ENCODE measurements at regions of chr12 and their contacts with region 1.

Region 1: GRCh38 chr12:26884765-26885576 is 52.0 kb upstream of the ITPR2 start:
- DNase-seq: peak; percentile 37 to 89 (median 82)
- H3K4me3 ChIP-seq: peak overlapping the region in 32 of 59 donors; percentile 1 to 49 (median 32)
- H3K27ac ChIP-seq: no peak overlapping the region
- H3K27me3 ChIP-seq: no peaks in the 10 kb centered on the region
- CTCF ChIP-seq: peak; percentile 78 to 99 (median 94)

Region 2: DNA sequence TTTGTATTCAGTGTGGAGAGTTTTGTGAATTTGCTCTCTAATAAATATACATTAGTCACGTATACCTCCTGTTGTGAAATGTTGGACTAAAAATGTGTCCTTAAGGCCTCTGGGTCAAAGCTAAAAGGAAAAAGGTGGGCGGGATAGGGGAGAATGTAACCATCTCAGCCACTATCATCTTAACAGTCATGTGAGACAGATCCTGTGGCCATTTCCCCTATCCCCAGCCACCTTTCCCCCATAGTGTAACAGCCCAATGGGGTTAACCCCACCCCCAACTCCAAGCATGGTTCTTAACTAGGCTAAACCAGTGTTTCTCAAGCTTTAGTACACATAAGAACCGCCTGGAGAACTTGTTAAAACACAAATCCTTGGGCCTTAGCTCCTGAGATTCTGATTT is 45.5 kb before region 1 on chr12:
- intact Hi-C with region 1: loop called in 1 of 2 experiments (anchors 5 kb)
- DNase-seq: no peak
- H3K4me3 ChIP-seq: no peak overlapping the region
- H3K27ac ChIP-seq: no peak overlapping the region
- H3K27me3 ChIP-seq: no peaks in the 10 kb centered on the region
- CTCF ChIP-seq: no peak

Region 3: GRCh38 chr12:26853303-26854030 is 31.5 kb before region 1 on chr12:
- intact Hi-C with region 1: loop called in 1 of 2 experiments (anchors 1 kb)
- DNase-seq: peak in 9 of 10 donors; percentile 48 to 79 (median 73)
- H3K4me3 ChIP-seq: peak overlapping the region in 3 of 59 donors; percentile 7 to 19 (median 11)
- H3K27ac ChIP-seq: no peak overlapping the region
- H3K27me3 ChIP-seq: no peaks in the 10 kb centered on the region
- CTCF ChIP-seq: peak; percentile 58 to 96 (median 88)

Region 4: DNA sequence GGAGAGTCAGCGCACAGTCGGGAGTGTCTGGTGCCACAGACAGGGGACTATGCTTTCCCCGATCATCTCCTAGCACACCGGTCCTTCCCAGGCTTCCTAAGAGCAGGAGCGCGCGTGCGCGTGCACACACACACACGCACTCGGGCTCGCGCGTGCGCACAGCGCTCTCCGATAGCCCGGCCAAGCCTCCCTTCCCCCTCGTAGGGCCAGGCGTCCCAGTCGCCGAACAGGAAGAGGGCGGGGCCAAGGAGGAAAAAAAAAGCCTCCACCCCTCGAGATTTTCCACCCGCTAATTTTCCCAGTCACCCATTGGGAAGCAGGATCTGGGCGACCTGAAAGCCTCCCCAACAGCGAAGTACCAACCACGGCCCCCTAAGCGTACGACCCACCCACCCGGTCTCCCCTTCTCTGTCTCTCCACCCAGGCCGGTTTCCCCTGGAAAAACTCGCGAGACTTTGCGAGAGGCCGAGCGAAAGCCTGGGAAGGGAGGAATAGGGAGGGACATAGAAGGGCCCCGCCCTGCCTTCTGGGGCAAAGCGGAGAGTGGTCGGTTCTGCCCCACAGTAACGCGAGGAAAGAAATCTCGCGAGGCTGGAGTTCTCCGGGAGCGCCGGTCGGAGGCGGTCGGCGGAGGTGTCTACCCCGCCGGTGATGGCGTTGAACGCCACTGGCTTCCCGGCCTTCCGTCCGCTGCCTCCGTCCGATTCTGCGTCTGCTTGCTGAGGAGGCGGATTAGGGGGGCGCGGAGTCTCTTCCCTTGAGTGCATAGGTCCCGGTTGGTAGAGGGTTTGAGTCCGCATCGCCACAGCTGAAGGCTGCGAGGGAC is 53.1 kb after region 1 on chr12 and contains the starts of genes FGFR1OP2 and INTS13:
- intact Hi-C with region 1: loop called in 1 of 2 experiments (anchors 5 kb)
- DNase-seq: peak; percentile 93 to 99 (median 97)
- H3K4me3 ChIP-seq: peak within 1 kb of the TSS; percentile 68 to 99 (median 91)
- H3K27ac ChIP-seq: peak within 1 kb of the TSS; percentile 90 to 100 (median 98)
- H3K27me3 ChIP-seq: no peaks in the 10 kb centered on the region
- CTCF ChIP-seq: peak in 27 of 56 donors; percentile 8 to 43 (median 19)
- total RNA-seq, gene FGFR1OP2: 75.1 to 154 (median 111) TPM
- total RNA-seq, gene INTS13: 8.6 to 34.6 (median 16.3) TPM

Measured in dorsolateral prefrontal cortex (tissue), 120 donors.